Activated T-helper 2 cell treated with anti-CD3 and anti-CD28 coated beads, Interferon-gamma antibody, Interleukin-2, Interleukin-4, amounts not matched to agents 10 μg/mL and 5 μg/mL and 100 μg/mL, durations not matched to agents 14 hours and 24 hours and 36 hours (primary cell): ENCODE measurements at regions of chr3 and their contacts with region 1.

Region 1: DNA sequence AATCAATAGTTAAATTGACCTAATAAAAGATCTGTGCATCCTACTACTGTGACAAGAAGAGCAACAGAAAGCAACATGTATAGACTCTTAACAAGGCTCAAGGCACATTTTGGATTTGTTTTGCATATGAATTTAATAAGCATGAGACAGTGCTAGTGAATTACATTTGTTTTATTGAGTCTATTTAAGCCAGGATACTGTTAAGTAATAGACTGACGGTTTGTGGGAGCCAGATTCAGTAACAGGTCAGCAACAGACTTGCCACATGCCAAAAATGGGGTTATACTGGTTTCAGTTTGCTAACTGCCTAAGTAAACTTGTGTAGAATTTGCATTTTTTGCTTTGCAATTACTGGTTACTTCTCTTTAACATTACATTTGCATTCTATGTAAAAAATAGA is 54.0 kb downstream of the MBNL1 start:
- DNase-seq: no peak
- H3K4me3 Mint-ChIP-seq: peak overlapping the region; percentile 11
- H3K27ac Mint-ChIP-seq: peak overlapping the region; percentile 40
- H3K4me1 Mint-ChIP-seq: peaks cover 63% of the 10 kb centered on the region
- H3K27me3 Mint-ChIP-seq: no peaks in the 10 kb centered on the region

Region 2: GRCh38 chr3:152298393-152299242 is 24.1 kb before region 1 on chr3:
- intact Hi-C with region 1: loop called (anchors 2 kb)
- DNase-seq: peak; percentile 47
- H3K4me3 Mint-ChIP-seq: peak overlapping the region; percentile 78
- H3K27ac Mint-ChIP-seq: peak overlapping the region; percentile 97
- H3K4me1 Mint-ChIP-seq: peaks cover 66% of the 10 kb centered on the region
- H3K27me3 Mint-ChIP-seq: no peaks in the 10 kb centered on the region